ENCODE measurements at regions of chr13 and their contacts with region 1.

Region 1: DNA sequence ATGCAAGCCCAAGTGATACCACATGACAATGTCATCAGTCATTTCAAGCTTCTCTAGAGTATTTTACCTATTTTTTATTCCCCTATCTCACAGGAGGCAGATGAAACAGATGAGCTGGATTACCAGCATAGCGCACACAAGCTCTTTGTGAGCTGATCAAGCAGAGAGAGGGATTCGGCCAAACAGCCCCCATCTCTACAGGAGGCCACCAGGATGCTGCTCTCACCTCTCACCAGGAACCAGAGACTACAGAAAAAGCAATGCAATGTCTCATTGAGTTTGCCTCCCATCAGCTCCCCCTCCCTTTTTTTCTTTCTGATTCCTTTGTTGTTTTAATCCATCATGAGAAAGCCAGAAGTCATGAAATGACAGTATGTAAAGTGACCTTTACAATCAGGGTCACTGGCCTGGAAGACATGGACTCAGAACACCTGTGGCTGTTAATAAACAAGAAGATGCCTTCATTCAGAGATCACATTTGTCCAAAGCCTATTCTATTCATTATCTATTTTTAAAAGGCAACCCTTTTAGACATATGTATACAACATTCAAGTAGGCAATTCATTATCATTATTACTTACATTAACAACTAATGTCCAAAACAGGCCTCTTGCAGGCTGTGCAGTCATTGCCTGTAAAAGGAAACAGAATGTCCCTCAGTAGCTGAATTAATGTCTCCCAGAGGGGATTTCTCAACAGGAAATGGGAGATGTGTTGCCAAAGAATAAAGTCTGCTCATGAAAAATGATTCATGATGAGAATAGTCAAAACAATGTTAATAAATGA is 656.6 kb downstream of the TBC1D4 start:
- DNase-seq: peak; percentile 85
- H3K4me3 ChIP-seq: no peak overlapping the region
- H3K27ac ChIP-seq: peak overlapping the region; percentile 79
- H3K4me1 ChIP-seq: peaks cover 15% of the 10 kb centered on the region
- H3K27me3 ChIP-seq: no peaks in the 10 kb centered on the region
- CTCF ChIP-seq: no peak
- POLR2A ChIP-seq: no peak

Region 2: DNA sequence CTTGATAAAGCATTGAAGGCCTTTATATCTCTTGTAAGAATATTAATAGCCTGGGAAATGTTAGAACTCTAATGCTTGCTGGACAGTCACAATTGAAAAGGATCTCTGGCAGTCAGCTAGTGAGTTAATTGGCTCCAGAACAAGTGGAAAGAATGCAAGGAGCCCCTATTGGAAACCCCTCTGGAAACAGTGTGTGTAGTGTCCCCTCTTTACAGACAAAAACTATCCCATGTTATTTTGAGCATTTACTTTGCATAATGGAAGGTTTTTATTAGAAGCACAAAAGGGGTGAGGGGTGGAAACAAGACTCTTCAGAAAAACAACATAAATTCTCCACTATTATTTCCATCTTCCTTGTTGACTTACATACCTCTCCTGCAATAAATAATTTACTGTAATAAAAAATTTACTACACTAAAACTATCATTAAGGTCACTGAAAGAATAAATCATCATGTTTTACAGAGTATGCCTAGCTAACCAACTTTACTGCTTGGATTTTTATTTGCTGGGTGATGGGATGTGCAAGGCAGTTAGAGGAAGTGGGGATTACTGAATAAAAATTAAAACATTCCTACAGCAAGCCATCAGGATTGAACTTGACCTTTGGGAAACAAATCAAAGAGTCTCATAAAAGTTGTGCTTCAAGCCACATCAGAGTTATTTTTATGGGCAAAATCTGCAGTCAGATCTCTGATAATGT is 46.2 kb after region 1 on chr13:
- CTCF ChIA-PET with region 1: no interaction called
- POLR2A ChIA-PET with region 1: no interaction called
- dilution Hi-C with region 1: no loop called
- intact Hi-C with region 1: loop called (anchors 1 kb)
- DNase-seq: peak; percentile 54
- H3K4me3 ChIP-seq: no peak overlapping the region
- H3K27ac ChIP-seq: peak overlapping the region; percentile 37
- H3K4me1 ChIP-seq: peaks cover 32% of the 10 kb centered on the region
- H3K27me3 ChIP-seq: no peaks in the 10 kb centered on the region
- CTCF ChIP-seq: no peak
- POLR2A ChIP-seq: no peak

Region 3: GRCh38 chr13:75135325-75135825 is 310.0 kb after region 1 on chr13:
- CTCF ChIA-PET with region 1: no interaction called
- POLR2A ChIA-PET with region 1: no interaction called
- dilution Hi-C with region 1: no loop called
- intact Hi-C with region 1: loop called (anchors 5 kb)
- DNase-seq: peak; percentile 78
- H3K4me3 ChIP-seq: no peak overlapping the region
- H3K27ac ChIP-seq: peak overlapping the region; percentile 52
- H3K4me1 ChIP-seq: peaks cover 7% of the 10 kb centered on the region
- H3K27me3 ChIP-seq: no peaks in the 10 kb centered on the region
- CTCF ChIP-seq: no peak
- POLR2A ChIP-seq: no peak